ENCODE measurements at regions of chr4 and their contacts with region 1.

Region 1: DNA sequence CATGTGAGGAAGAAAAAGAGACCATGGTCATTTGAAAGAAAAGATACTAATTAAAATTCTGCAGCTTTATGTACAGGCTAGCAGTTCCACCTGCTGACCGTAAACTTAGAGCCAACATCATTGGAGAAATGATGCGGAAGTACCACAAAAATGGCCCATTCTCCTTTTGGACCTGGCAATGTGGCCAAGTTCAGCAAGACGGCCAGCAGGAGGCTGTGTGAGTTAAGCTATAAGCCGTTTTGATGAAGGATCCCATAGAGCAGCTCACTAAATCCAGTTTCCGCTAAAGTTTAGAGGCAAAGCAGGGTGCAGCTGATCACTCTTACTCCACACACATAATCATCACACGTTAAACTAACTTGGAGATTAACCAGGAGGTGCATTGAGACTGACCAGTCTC is 133.8 kb downstream of the LDB2 start:
- DNase-seq: no peak
- H3K4me3 ChIP-seq: no peak overlapping the region
- H3K27ac ChIP-seq: no peak overlapping the region
- H3K4me1 ChIP-seq: peaks cover 0 to 4% of the 10 kb centered on the region in 2 donors
- H3K27me3 ChIP-seq: no peaks in the 10 kb centered on the region
- CTCF ChIP-seq: no peak
- POLR2A ChIP-seq: no peak

Region 2: DNA sequence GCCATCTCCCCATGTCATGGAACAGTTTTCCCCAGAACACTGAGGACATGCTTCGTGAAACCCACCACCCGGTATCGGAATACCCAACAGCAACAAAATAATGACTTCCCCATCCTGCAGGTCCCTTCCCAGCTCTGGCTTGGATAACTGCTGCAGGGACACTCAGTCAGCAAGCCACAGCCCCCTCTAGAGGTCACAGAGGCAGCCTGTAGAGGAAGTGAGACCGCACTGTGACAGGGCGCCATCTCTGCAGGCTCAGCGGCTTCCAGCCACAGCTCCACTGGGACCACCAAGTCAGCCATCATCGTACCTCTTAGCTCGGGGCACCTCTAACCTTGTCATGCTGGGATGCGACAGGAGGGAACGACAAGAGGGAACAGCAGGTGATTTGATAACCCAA is 182.1 kb before region 1 on chr4:
- intact Hi-C with region 1: no loop called
- DNase-seq: no peak
- H3K4me3 ChIP-seq: no peak overlapping the region
- H3K27ac ChIP-seq: no peak overlapping the region
- H3K4me1 ChIP-seq: peaks cover 6% of the 10 kb centered on the region in 2 donors
- H3K27me3 ChIP-seq: no peaks in the 10 kb centered on the region
- CTCF ChIP-seq: no peak
- POLR2A ChIP-seq: no peak

Region 3: GRCh38 chr4:16897991-16898827 is 133.6 kb after region 1 on chr4 and contains the start of gene LDB2:
- intact Hi-C with region 1: loop called (anchors 10 kb)
- DNase-seq: peak; percentile 77 to 89
- H3K4me3 ChIP-seq: peak within 1 kb of the TSS; percentile 54 to 66
- H3K27ac ChIP-seq: peak within 1 kb of the TSS; percentile 87 to 89
- H3K4me1 ChIP-seq: no peaks in the 10 kb centered on the region
- H3K27me3 ChIP-seq: no peaks in the 10 kb centered on the region
- CTCF ChIP-seq: no peak
- POLR2A ChIP-seq: peak; percentile 17 to 20
- total RNA-seq, gene LDB2: 48.8 to 298 (median 152) TPM

Region 4: GRCh38 chr4:17024425-17024824 is 259.8 kb after region 1 on chr4:
- intact Hi-C with region 1: no loop called
- DNase-seq: no peak
- H3K4me3 ChIP-seq: no peak overlapping the region
- H3K27ac ChIP-seq: no peak overlapping the region
- H3K4me1 ChIP-seq: no peaks in the 10 kb centered on the region
- H3K27me3 ChIP-seq: no peaks in the 10 kb centered on the region
- CTCF ChIP-seq: no peak
- POLR2A ChIP-seq: no peak

Region 5: DNA sequence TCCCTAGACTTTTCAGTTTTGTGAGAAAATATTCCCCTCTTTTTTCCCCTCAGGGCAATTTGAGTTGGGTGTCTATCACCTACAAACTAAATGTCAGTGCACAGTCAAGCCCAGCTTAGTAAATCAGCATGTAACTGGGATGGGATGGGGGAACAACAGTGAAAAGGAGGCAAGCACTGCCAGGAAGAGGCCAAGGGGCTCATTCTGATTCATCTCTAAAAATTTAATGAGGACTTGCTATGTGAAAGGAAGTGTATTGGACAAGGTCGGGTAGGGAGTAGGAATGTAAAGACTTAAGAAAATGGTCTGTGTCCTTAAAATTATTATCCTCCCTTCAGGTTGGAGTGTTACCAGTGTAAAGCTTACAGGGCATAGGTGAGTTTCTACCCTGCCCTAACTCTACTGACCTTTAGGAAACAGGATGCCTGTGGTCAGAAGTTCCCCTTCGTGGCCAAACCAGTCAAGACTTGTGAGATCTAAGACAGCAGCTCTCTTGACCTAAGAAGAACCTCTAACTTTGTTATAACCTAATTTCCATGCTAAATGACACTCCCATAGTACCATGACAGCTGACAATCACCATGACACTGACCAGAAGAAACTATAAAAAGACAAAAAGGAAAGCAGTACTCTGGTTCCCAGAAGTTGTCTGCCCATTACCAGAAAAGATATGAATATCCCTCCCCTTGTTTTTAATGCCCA is 328.3 kb after region 1 on chr4:
- intact Hi-C with region 1: no loop called
- DNase-seq: no peak
- H3K4me3 ChIP-seq: no peak overlapping the region
- H3K27ac ChIP-seq: no peak overlapping the region
- H3K4me1 ChIP-seq: peaks cover 0 to 5% of the 10 kb centered on the region in 2 donors
- H3K27me3 ChIP-seq: no peaks in the 10 kb centered on the region
- CTCF ChIP-seq: no peak
- POLR2A ChIP-seq: no peak

Measured in uterus (tissue), 4 donors.